PC-9 (cell line): ENCODE measurements at regions of chr5 and their contacts with region 1.

Region 1: DNA sequence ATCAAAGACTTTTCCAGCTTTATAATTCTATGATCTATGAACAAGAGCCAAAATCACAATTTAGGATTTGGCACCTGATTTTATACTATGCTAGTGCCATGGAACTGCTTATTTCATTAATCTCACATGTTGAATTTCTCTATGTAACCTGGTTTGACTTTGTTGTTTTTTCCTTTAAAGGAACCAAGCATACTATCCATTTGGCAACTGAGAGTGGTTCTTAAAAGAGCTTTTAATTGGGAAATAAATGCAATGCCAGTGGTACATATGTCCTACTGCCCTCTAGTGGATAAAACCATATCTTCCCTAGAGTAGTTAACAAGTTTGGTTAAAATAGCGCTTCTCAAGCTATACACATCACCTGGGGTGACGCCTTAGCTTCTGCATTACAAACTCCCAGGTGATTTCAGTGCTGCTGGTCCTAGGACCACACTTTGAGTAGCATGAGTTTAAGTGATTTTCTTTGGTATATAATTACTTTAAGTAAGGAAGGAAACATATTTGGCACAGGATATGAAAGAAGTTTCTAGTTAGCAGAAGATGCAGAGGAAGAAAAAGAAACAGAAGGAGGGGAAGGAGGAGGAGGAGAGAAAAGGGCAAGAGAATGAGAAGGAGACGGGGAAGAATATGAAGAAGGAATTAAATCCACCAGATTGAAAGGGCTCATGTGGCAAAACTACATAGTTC is 56.8 kb downstream of the FGF10 start:
- DNase-seq: peak in 1 of 2 experiments; percentile 44
- H3K4me3 ChIP-seq: no peak overlapping the region
- H3K27ac ChIP-seq: no peak overlapping the region
- H3K4me1 ChIP-seq: no peaks in the 10 kb centered on the region
- H3K27me3 ChIP-seq: no peaks in the 10 kb centered on the region
- CTCF ChIP-seq: peak; percentile 90

Region 2: DNA sequence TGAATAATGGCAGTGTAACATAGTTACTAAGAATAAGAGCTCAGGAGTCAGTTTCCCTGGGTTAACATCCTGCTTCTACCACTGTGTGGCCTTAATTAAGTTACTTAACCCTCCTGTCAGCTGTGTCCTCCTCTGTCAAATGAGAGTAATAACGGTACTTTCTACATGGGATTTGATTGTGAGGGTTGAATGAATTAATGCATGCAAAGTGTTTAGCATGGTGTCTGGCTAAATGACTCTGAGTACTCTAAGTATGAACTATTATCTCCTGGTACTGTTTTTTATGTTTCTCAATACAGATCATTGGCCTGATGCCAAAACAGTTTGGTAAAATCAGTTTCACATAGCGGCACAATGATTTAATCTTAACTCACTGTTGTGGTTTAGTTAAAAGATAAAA is 1192.1 kb before region 1 on chr5:
- CTCF ChIA-PET with region 1: interaction called, 11 read pairs
- POLR2A ChIA-PET with region 1: no interaction called
- intact Hi-C with region 1: no loop called
- DNase-seq: no peak
- H3K4me3 ChIP-seq: no peak overlapping the region
- H3K27ac ChIP-seq: no peak overlapping the region
- H3K4me1 ChIP-seq: no peaks in the 10 kb centered on the region
- H3K27me3 ChIP-seq: no peaks in the 10 kb centered on the region
- CTCF ChIP-seq: no peak

Region 3: DNA sequence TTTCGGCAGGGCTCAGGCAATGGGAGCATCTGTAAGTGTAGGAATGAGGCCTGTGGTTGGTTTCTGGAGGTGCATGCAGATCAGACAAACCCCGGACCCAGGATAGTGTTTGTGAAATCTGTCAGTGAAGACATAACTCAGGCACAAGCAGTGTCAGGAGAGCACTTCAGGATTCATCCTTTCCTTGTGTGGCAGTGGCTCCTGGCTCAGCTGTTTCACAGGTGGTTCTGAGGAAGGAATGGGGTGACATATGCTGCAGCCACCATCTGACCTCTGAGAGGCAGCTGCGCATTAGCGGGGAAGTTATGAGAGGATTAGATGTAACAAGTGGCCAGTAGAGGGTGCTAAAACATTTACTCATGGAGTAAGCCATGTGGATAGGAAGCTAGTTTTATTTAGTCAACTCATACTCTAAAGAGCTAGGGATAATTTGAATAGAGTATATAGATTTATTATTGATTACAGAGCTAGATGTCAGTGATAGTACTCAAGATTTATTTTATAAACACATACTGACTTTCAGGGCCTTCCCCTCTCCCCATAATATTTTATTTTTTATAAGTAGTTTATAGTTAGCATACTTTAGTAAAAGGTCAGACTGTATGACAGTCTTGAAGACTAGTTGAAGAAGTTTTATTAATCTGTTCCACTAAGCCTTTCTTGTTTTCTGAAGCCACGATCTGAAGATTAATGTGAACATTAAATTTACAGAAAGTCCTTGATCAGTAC is 701.1 kb before region 1 on chr5:
- CTCF ChIA-PET with region 1: interaction called, 10 read pairs
- POLR2A ChIA-PET with region 1: no interaction called
- intact Hi-C with region 1: loop called (anchors 1 kb)
- DNase-seq: peak; percentile 48 to 74
- H3K4me3 ChIP-seq: no peak overlapping the region
- H3K27ac ChIP-seq: no peak overlapping the region
- H3K4me1 ChIP-seq: no peaks in the 10 kb centered on the region
- H3K27me3 ChIP-seq: no peaks in the 10 kb centered on the region
- CTCF ChIP-seq: peak; percentile 86

Region 4: GRCh38 chr5:43661102-43661501 is 671.3 kb before region 1 on chr5:
- CTCF ChIA-PET with region 1: interaction called, 3 read pairs
- POLR2A ChIA-PET with region 1: no interaction called
- intact Hi-C with region 1: loop called (anchors 1 kb)
- DNase-seq: peak; percentile 25 to 37
- H3K4me3 ChIP-seq: no peak overlapping the region
- H3K27ac ChIP-seq: no peak overlapping the region
- H3K4me1 ChIP-seq: no peaks in the 10 kb centered on the region
- H3K27me3 ChIP-seq: no peaks in the 10 kb centered on the region
- CTCF ChIP-seq: peak; percentile 89

Region 5: GRCh38 chr5:43729846-43730478 is 602.5 kb before region 1 on chr5:
- CTCF ChIA-PET with region 1: interaction called, 4 read pairs
- POLR2A ChIA-PET with region 1: no interaction called
- intact Hi-C with region 1: loop called (anchors 2 kb)
- DNase-seq: no peak
- H3K4me3 ChIP-seq: no peak overlapping the region
- H3K27ac ChIP-seq: no peak overlapping the region
- H3K4me1 ChIP-seq: no peaks in the 10 kb centered on the region
- H3K27me3 ChIP-seq: peaks cover 26% of the 10 kb centered on the region; the same call in 1 of the 2 replicates
- CTCF ChIP-seq: peak; percentile 90

Region 6: GRCh38 chr5:44312374-44312773 is 20.1 kb before region 1 on chr5:
- CTCF ChIA-PET with region 1: interaction called, 14 read pairs
- POLR2A ChIA-PET with region 1: no interaction called
- intact Hi-C with region 1: no loop called
- DNase-seq: no peak
- H3K4me3 ChIP-seq: no peak overlapping the region
- H3K27ac ChIP-seq: no peak overlapping the region
- H3K4me1 ChIP-seq: no peaks in the 10 kb centered on the region
- H3K27me3 ChIP-seq: no peaks in the 10 kb centered on the region
- CTCF ChIP-seq: no peak